ENCODE measurements at regions of chr6 and their contacts with region 1.

Region 1: DNA sequence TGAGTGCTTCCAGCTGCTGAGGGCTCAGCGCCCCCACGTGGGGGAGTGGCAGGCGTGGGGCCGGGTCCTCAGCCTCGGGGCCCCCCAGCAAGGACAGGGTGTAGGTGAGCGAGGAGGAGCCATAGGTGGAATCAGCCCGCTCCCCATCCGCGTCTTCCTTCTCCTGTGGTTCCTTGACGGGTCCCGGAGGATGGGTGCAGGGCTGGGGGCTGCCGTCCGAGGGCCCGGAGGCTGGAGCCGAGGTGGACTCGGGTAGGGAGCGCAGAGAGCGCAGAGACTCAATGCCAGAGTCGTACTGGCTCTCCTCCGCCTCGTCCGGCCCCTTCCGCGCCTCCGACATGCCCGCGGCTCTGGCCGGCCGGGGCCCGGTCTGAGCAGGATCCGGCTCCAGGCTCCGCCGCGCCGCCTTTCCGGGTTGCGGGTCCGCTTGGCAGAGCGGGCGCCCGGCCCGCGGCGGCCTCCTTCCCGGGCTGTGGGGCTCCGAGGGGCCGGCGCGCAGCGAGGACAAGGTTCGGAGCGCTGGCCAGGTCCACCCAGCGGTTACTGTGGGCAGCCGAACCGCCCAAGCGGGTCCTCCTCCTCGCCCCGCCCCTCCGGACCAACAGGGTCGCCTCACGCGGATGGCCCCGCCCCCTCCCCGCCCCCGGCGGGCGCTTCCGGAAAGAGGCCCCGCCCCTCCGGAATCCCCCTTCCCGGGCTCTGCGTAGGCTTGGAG is at the start of gene NFKBIE:
- DNase-seq: peak; percentile 98
- ATAC-seq: peak; percentile 97
- total RNA-seq, gene NFKBIE: 3.7 TPM

Region 2: GRCh38 chr6:44304282-44305199 is 39.4 kb after region 1 on chr6:
- intact Hi-C with region 1: loop called (anchors 5 kb)
- DNase-seq: no peak
- ATAC-seq: peak; percentile 32

Region 3: DNA sequence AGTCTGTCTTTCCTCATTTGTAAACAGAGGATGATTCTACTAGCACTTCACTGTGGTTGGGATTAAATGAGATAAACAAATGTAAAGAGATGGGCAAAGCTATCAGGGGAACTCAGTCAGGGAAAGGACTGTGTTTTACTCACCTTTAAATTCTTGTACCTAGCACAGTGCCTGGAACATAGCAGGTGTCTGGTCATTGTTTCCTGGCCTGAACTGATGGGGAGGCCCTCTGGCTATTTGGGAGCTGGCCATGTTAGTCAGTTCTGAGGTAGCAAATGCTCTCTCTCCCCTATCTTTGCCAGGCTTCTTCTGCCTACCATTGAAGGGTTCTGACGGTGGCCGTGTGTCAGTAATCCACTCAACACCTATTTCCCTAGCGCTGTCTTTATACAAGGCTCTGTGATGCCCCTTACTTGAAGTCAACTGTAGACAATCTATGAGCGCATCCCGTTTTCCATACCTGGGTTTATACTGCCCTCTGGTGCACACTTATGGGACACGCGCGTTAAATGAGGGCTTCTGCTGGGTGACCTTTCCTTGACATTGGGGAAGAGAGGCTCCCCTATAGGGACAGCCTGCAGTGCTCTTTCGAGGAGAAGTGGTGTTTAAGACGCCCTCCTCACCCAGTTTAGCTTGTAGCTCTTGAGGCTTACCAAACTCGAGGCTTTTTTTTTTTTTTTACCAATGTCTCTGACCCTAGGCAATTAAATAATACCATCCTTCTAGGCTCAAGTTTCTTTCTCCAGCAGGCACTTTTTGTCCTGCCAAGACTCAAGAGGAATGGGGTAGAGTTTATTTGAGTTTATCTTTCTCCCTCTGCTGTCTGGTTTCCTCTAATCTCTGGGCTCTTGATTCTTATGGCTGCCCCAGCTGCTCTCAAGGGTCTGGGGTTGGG is 73.3 kb after region 1 on chr6:
- intact Hi-C with region 1: loop called (anchors 1 kb)
- DNase-seq: peak; percentile 55
- ATAC-seq: peak; percentile 82